Sigmoid colon (tissue), 7 donors: ENCODE measurements at regions of chr17 and their contacts with region 1.

Region 1: DNA sequence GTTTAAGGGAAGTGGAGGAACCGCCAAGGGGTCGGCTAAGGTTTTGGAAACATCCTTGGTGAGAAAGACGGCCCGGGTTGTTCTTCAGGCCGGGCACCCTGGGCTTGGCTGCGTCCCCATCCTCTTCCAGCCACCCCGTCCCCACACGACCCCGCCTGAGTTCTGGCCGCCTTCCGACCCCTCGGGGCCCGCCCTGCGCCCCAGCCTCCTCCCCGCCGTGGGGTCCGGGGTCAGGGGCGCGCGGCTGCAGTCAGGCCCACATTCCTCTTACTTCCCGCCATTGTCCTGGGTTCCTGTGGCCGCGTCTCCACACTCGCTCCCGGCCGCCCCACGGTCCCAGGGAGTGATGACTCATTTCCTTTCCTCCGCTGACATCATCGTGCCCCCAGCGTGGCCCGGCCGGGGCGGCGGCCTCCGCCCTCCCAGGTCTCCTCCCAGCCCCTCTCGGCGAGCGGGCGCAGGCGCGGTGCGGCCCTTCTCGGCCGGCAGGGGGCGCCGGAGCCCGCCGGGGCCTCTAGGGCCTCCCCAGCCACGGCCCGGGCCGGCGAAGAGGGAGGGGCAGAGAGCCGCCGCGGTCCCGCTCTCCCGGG is 59.6 kb downstream of the WSB1 start:
- DNase-seq: peak; percentile 96
- H3K4me3 ChIP-seq: peak overlapping the region; percentile 46 to 68 (median 60)
- H3K27ac ChIP-seq: peak overlapping the region; percentile 87 to 96 (median 92)
- H3K4me1 ChIP-seq: peaks cover 0 to 24% (median 18%) of the 10 kb centered on the region in 4 donors
- H3K27me3 ChIP-seq: no peaks in the 10 kb centered on the region
- CTCF ChIP-seq: peak; percentile 6 to 97 (median 46)
- EP300 ChIP-seq: peak in 2 of 4 donors; percentile 12
- POLR2A ChIP-seq: peak; percentile 77 to 79

Region 2: DNA sequence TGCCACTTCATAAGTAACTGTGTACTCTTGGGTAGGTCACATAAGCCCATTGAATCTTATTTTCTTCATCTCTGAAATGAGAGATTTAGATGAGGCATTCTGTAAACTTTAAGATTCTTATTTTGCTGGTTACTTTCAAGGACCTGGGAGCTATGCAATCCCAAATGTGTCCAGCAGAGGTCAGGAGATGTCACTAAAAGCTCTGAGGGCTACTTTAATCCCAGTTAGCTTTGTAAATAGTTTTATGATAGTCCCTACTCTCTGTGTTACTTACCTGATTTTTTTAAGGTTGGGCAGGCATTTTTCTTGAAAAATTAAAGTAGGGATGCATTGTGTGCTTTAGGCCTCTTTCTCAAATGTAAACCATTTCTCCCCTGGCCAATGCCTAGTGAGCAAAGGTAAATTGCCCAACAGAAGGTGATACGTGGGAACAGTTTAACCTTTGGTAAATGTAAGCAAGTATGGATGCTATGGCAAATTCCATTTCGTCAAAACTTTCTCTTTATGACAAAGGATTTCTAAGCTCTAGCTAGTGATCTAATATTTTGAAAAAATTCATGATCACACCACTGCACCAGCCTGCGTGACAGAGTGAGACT is 116.7 kb before region 1 on chr17:
- intact Hi-C with region 1: loop called (anchors 5 kb)
- DNase-seq: peak; percentile 87
- H3K4me3 ChIP-seq: no peak overlapping the region
- H3K27ac ChIP-seq: no peak overlapping the region
- H3K4me1 ChIP-seq: peaks cover 0 to under 1% (median 0%) of the 10 kb centered on the region in 4 donors
- H3K27me3 ChIP-seq: no peaks in the 10 kb centered on the region
- CTCF ChIP-seq: peak; percentile 71 to 95 (median 92)
- EP300 ChIP-seq: no peak
- POLR2A ChIP-seq: no peak

Region 3: GRCh38 chr17:27381007-27381501 is 27.5 kb after region 1 on chr17:
- intact Hi-C with region 1: loop called (anchors 2 kb)
- DNase-seq: peak; percentile 68
- H3K4me3 ChIP-seq: no peak overlapping the region
- H3K27ac ChIP-seq: peak overlapping the region in 1 of 4 donors; percentile 88
- H3K4me1 ChIP-seq: peaks cover 0 to 72% (median 55%) of the 10 kb centered on the region in 4 donors
- H3K27me3 ChIP-seq: no peaks in the 10 kb centered on the region
- CTCF ChIP-seq: peak; percentile 46 to 80 (median 60)
- EP300 ChIP-seq: no peak
- POLR2A ChIP-seq: no peak

Region 4: DNA sequence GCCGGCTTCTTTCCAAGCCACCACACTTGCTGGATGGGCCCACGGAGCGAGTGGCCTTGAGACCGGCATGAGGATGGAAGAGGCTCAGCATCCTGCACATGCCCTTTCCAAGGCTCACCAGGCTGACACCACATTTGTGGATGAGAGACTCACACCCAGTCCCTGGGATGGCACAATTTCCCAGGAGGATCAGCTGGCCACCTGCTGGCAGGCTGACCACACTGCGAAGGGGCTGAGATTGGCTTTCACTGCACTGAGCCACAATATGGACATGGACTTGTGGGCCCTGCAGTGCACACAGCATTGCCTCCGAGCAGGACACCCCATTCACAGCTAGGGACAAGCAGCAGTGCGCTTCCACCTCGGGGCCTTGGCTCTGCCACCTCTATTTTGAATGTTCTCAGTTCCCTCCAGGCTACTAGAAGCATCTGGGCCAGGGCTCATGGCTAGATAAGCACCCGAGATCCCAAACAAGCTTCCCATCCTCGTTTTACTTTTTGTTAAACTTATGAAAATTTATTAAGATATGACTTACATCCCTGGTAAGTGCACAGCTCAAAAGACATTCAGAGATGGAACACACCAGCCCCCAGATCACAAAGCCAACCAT is 77.4 kb after region 1 on chr17:
- intact Hi-C with region 1: loop called (anchors 1 kb)
- DNase-seq: peak; percentile 74
- H3K4me3 ChIP-seq: no peak overlapping the region
- H3K27ac ChIP-seq: no peak overlapping the region
- H3K4me1 ChIP-seq: no peaks in the 10 kb centered on the region
- H3K27me3 ChIP-seq: no peaks in the 10 kb centered on the region
- CTCF ChIP-seq: peak; percentile 36 to 62 (median 52)
- EP300 ChIP-seq: no peak
- POLR2A ChIP-seq: no peak

Region 5: DNA sequence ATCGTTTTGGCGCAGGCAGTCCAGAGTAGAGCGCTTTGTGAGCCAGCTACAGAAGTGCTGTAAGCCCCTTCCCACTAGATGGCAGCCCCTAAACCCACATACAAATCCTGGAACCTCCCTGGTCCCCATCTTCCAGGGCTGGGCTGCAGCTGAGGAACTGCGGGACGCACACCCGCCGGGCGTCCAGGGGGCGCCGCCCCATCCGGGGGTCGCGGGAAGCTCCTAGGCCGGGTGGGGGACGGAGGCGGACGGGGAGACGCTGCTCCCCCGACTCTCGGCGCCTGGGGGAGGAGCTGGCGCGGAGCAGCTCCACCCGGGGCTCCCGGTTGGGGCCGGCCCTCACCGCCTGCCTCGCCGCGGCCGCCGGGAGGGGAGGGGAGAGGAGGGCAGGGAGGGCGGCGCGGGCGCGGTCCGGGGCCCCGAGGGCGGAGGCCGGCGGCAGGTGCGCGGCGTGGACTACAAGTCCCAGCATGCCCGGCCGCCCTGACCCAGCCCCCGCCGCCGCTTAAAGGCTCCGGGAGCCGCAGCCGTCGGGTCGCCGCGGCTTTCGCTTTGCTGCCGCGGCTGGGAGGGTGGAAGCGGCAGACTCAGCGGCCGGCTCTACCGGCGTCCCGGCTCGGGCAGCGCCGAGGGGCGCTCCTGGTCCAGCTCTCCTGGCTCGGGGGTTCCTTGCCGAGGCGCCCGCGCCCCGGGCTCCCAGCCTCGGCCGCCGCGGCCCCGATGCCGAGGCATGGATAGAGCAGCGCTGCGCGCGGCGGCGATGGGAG is 102.5 kb after region 1 on chr17 and contains the start of gene KSR1:
- intact Hi-C with region 1: loop called (anchors 2 kb)
- DNase-seq: peak; percentile 90
- H3K4me3 ChIP-seq: peak within 1 kb of the TSS; percentile 64 to 90 (median 81)
- H3K27ac ChIP-seq: peak within 1 kb of the TSS; percentile 86 to 93 (median 89)
- H3K4me1 ChIP-seq: peaks cover 0 to 38% (median 28%) of the 10 kb centered on the region in 4 donors
- H3K27me3 ChIP-seq: no peaks in the 10 kb centered on the region
- CTCF ChIP-seq: peak in 1 of 4 experiments; percentile 22
- EP300 ChIP-seq: no peak
- POLR2A ChIP-seq: peak in 1 of 2 donors; percentile 31
- total RNA-seq, gene KSR1: 13.8 to 25.8 (median 18.9) TPM

Region 6: DNA sequence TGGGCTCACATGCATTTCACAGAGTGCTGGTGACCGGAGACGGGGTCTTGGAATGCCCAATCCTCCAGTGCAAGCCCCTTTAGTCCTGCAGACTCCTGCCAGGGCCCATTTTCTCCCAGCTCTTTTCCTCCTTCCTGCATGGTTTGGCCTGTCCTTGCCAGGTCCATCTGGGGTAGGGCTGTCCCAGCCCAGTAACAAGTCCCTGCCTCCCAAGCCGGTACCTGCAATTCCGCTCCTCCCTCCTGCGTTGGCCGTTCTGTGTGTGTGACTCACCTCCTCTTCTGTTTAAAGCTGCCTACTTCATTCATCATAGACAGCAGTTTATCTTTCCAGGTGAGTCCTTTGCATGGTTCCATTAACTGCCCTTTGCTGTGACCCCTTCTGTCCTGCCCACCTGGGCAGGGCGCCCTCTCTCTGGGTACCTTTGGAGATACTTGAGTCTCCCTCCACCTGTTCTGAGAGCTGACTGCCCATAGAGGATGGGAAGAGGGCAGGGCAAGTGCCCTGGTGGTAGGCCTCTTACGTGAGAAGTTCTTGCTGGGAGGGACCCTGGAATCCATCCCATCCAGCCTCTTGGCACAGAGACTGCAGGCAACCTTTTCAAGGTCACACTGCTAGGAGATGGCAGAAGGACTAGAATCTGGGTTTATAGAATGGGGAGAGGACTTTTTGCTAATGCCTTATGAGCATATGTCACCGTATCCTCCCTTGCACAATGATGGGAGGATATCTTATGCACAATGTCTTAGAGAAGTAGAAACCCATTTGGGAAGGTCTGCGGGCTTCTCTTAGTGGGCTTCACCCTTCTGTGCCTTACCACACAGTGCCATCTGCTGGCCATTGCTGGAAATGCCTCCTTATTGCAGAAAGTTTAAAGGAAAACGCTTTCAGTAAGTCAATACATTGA is 247.8 kb after region 1 on chr17:
- intact Hi-C with region 1: loop called (anchors 1 kb)
- DNase-seq: peak; percentile 87
- H3K4me3 ChIP-seq: no peak overlapping the region
- H3K27ac ChIP-seq: no peak overlapping the region
- H3K4me1 ChIP-seq: peaks cover 0 to 13% (median 3%) of the 10 kb centered on the region in 4 donors
- H3K27me3 ChIP-seq: no peaks in the 10 kb centered on the region
- CTCF ChIP-seq: peak; percentile 85 to 95 (median 86)
- EP300 ChIP-seq: no peak
- POLR2A ChIP-seq: no peak

Region 7: DNA sequence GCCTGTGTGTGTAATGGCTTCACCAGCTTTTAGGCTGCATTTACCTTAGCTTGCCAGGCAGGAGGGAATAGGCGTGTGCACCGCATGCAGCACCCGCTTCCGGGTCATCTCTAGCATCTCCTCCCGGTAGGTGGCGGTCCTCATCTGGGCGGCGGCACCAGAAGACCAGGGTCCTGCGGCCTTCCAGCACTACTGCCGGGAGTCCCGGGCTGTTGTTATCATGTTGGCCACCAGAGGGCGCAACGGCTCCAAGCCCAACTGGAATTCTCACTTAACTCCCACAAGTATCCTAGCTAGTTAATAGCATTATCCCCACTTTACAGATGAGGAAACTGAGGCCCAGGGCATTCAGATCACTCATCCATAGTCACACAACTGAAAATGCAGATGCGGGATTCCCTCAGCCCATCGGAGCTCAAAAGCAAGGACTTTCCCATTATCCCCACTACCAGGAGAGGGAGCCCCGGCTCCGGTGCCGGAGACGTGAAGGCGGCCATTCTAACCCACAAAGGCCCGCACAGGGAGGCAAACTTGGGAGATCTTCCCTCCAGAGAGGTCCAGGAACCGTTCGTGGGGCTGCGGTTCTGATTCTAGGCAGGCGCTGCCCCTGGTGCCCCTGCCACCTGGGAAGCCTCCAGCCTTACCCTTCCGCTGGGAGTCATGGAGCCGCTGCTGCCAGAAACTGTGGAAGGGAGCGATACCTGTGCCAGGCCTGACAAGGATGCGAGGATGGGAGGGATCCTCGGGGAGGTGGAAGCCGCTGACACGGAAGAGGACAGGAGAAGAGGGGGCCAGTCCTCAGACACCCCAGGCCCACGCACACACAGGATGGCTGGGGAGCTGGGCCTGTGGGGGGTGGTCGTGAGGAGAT is 301.3 kb after region 1 on chr17:
- intact Hi-C with region 1: loop called (anchors 5 kb)
- DNase-seq: peak; percentile 79
- H3K4me3 ChIP-seq: no peak overlapping the region
- H3K27ac ChIP-seq: no peak overlapping the region
- H3K4me1 ChIP-seq: no peaks in the 10 kb centered on the region
- H3K27me3 ChIP-seq: no peaks in the 10 kb centered on the region
- CTCF ChIP-seq: peak; percentile 36 to 86 (median 76)
- EP300 ChIP-seq: no peak
- POLR2A ChIP-seq: no peak